CD8-positive, alpha-beta T cell (primary cell): ENCODE measurements at regions of chr1 and their contacts with region 1.

Region 1: DNA sequence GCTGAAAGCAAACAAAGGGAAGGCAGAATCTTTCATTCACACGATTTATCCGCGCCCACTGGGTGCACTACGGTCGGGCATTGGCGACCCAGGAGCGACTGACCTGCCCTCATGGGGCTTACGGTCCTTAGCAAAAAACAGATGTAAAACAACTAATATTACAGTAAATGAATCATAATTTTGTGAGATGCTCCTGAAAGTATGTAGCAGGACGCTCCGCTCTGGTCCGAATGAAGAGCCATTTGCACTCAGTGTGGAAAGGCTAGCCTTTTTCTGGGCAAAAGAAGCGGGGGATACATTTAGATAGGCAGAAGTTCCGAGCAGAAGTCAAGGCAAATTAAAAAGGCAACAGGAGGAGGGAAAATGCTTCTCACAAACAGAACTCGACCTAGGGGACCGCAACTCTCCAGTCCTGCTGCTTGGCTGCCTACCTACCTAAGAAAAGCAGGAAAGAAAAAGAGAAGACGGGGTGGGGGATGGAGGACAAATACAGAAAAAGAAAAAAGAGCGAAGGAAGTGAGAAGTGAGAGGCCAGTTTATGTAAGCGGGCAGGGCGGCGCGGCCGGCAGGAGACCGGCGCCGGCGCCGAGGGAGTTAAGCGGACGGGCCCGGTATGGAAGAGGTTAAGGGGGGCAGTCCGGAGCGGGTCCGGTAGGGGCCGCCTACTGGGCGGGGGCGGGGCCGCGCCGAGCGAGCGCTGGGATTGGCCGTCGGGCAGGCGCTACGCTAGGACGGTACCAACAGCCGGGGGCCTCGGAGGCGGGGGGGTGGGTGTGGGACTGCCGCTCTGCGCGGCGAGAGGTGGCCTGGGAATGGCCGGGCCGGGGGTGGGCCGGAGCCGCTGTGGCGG is at the start of gene FAM20B:
- DNase-seq: peak; percentile 82 to 94 (median 90)
- ATAC-seq: peak; percentile 85
- H3K4me3 ChIP-seq: peak within 1 kb of the TSS; percentile 70 to 81
- H3K4me3 Mint-ChIP-seq: peak within 1 kb of the TSS; percentile 87
- H3K27ac ChIP-seq: peak within 1 kb of the TSS; percentile 77 to 83
- H3K27ac Mint-ChIP-seq: peak within 1 kb of the TSS; percentile 88
- H3K4me1 ChIP-seq: peaks cover 25% of the 10 kb centered on the region
- H3K4me1 Mint-ChIP-seq: peaks cover 40% of the 10 kb centered on the region
- H3K27me3 ChIP-seq: no peaks in the 10 kb centered on the region
- H3K27me3 Mint-ChIP-seq: no peaks in the 10 kb centered on the region
- CTCF ChIP-seq: no peak
- total RNA-seq, gene FAM20B: 11.1 to 11.2 TPM

Region 2: GRCh38 chr1:178916448-178917174 is 108.7 kb before region 1 on chr1:
- CTCF ChIA-PET with region 1: no interaction called
- POLR2A ChIA-PET with region 1: no interaction called
- intact Hi-C with region 1: no loop called
- DNase-seq: no peak
- ATAC-seq: no peak
- H3K4me3 ChIP-seq: no peak overlapping the region
- H3K4me3 Mint-ChIP-seq: no peak overlapping the region
- H3K27ac ChIP-seq: no peak overlapping the region
- H3K27ac Mint-ChIP-seq: no peak overlapping the region
- H3K4me1 ChIP-seq: no peaks in the 10 kb centered on the region
- H3K4me1 Mint-ChIP-seq: no peaks in the 10 kb centered on the region
- H3K27me3 ChIP-seq: peaks cover 0 to 3% of the 10 kb centered on the region in 2 experiments
- H3K27me3 Mint-ChIP-seq: no peaks in the 10 kb centered on the region
- CTCF ChIP-seq: no peak

Region 3: GRCh38 chr1:179002552-179003345 is 22.6 kb before region 1 on chr1:
- CTCF ChIA-PET with region 1: interaction called, 11 read pairs
- POLR2A ChIA-PET with region 1: no interaction called
- intact Hi-C with region 1: no loop called
- DNase-seq: peak; percentile 40 to 83 (median 71)
- ATAC-seq: peak; percentile 76
- H3K4me3 ChIP-seq: no peak overlapping the region
- H3K4me3 Mint-ChIP-seq: no peak overlapping the region
- H3K27ac ChIP-seq: no peak overlapping the region
- H3K27ac Mint-ChIP-seq: no peak overlapping the region
- H3K4me1 ChIP-seq: peaks cover 24% of the 10 kb centered on the region
- H3K4me1 Mint-ChIP-seq: peaks cover 20% of the 10 kb centered on the region
- H3K27me3 ChIP-seq: no peaks in the 10 kb centered on the region
- H3K27me3 Mint-ChIP-seq: no peaks in the 10 kb centered on the region
- CTCF ChIP-seq: peak; percentile 91

Region 4: GRCh38 chr1:179129702-179130473 is 104.5 kb after region 1 on chr1:
- CTCF ChIA-PET with region 1: no interaction called
- POLR2A ChIA-PET with region 1: no interaction called
- intact Hi-C with region 1: loop called in 1 of 2 experiments (anchors 2 kb)
- DNase-seq: peak in 5 of 9 experiments; percentile 6 to 83 (median 64)
- ATAC-seq: peak; percentile 96
- H3K4me3 ChIP-seq: peak overlapping the region; percentile 12 to 26
- H3K4me3 Mint-ChIP-seq: peak overlapping the region; percentile 68
- H3K27ac ChIP-seq: peak overlapping the region; percentile 52 to 80
- H3K27ac Mint-ChIP-seq: peak overlapping the region; percentile 90
- H3K4me1 ChIP-seq: peaks cover 17% of the 10 kb centered on the region
- H3K4me1 Mint-ChIP-seq: peaks cover 19% of the 10 kb centered on the region
- H3K27me3 ChIP-seq: no peaks in the 10 kb centered on the region
- H3K27me3 Mint-ChIP-seq: no peaks in the 10 kb centered on the region
- CTCF ChIP-seq: no peak

Region 5: DNA sequence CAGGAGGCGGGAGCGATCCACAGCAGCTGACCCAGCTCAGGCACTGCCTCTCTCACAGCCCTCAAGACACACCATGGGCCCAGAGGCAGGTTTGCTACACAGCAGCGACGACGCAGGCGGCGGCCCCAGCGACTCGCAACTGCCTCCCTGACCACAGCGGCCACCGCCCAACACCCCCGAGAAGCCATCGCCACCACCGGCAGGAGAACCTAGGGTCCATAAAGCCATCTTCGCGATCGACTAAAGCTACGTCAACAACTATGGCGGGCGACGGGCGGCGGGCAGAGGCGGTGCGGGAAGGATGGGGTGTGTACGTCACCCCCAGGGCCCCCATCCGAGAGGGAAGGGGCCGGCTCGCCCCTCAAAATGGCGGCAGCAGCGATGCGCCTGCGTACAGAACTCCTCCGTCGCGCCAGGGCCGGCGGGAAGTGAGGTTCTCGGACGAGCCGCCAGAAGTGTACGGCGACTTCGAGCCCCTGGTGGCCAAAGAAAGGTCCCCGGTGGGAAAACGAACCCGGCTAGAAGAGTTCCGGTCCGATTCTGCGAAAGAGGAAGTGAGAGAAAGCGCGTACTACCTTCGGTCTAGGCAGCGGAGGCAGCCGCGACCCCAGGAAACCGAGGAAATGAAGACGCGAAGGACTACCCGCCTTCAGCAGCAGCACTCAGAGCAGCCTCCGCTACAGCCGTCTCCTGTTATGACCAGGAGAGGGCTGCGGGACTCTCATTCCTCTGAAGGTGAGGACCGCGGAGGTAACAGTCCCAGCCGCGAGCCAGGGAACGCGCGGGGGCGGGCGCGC is 857.1 kb after region 1 on chr1 and contains the start of gene TOR1AIP1:
- CTCF ChIA-PET with region 1: no interaction called
- POLR2A ChIA-PET with region 1: no interaction called
- intact Hi-C with region 1: loop called (anchors 1 to 5 kb)
- DNase-seq: peak; percentile 95 to 99 (median 97)
- ATAC-seq: peak; percentile 74
- H3K4me3 ChIP-seq: peak within 1 kb of the TSS; percentile 91 to 95
- H3K4me3 Mint-ChIP-seq: peak within 1 kb of the TSS; percentile 94
- H3K27ac ChIP-seq: peak within 1 kb of the TSS; percentile 98 to 99
- H3K27ac Mint-ChIP-seq: peak within 1 kb of the TSS; percentile 100
- H3K4me1 ChIP-seq: peaks cover 37% of the 10 kb centered on the region
- H3K4me1 Mint-ChIP-seq: peaks cover 59% of the 10 kb centered on the region
- H3K27me3 ChIP-seq: no peaks in the 10 kb centered on the region
- H3K27me3 Mint-ChIP-seq: no peaks in the 10 kb centered on the region
- CTCF ChIP-seq: peak; percentile 41
- total RNA-seq, gene TOR1AIP1: 108 to 110 TPM

Region 6: GRCh38 chr1:180154325-180155181 is 1129.2 kb after region 1 on chr1 and contains the start of gene QSOX1:
- CTCF ChIA-PET with region 1: no interaction called
- POLR2A ChIA-PET with region 1: no interaction called
- intact Hi-C with region 1: loop called (anchors 2 to 5 kb)
- DNase-seq: peak; percentile 77 to 95 (median 88)
- ATAC-seq: peak; percentile 96
- H3K4me3 ChIP-seq: peak within 1 kb of the TSS; percentile 86
- H3K4me3 Mint-ChIP-seq: peak within 1 kb of the TSS; percentile 91
- H3K27ac ChIP-seq: peak within 1 kb of the TSS; percentile 60 to 62
- H3K27ac Mint-ChIP-seq: peak within 1 kb of the TSS; percentile 87
- H3K4me1 ChIP-seq: peaks cover 22% of the 10 kb centered on the region
- H3K4me1 Mint-ChIP-seq: peaks cover 43% of the 10 kb centered on the region
- H3K27me3 ChIP-seq: no peaks in the 10 kb centered on the region
- H3K27me3 Mint-ChIP-seq: no peaks in the 10 kb centered on the region
- CTCF ChIP-seq: no peak
- total RNA-seq, gene QSOX1: 12.8 to 12.9 TPM